Prostate gland (tissue), 2 donors: ENCODE measurements at regions of chr19 and their contacts with region 1.

Region 1: DNA sequence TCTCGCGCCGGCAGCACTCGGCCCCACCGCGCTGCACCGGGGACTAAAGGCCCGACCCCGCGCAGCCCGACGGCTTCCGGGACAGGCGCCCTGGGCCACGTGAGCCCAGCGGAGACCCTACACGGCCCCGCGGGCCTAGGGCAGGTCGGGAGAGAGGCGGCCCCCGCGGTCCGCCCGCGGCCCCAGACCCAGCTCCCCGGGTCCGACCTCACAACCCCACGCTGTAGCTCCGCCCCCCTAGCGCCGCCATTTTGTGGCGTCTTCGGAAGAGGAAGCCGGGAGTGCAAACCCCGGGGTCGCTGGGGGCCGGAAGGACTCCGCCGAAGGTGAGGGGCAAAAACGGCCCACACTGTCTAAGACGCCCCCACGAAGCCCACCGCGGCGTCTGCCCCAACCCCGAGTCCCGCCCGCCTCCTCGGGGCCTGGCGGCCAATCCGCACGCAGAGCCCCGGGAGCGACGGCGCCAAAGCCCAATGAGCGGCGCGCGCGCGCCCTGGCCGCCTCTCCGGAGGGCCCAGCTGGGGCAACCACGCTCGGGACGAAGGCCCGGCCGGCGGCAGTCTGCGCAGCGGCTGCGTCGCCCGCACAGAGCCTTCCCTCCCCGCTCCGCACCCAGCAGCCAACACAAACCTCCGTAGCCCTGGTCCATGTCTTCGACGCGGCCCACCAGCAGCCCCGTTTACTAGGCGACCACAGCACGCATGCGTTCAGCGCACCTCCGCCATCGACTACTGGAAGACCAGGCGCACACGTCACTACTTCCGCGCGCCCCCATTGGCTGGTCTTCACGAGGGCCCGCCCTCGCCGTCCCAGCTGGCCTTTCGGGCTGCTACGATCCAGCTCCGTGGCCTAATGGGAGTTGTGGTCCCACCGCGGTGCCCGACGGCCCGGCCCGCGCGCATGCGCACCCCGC is at the start of gene AKAP8:
- DNase-seq: peak; percentile 99
- H3K4me3 ChIP-seq: peak within 1 kb of the TSS; percentile 80 to 94
- H3K27ac ChIP-seq: peak within 1 kb of the TSS; percentile 92 to 96
- H3K4me1 ChIP-seq: peaks cover 17% of the 10 kb centered on the region
- H3K27me3 ChIP-seq: no peaks in the 10 kb centered on the region
- CTCF ChIP-seq: peak in 2 of 4 experiments; percentile 4 to 14
- POLR2A ChIP-seq: peak; percentile 66
- total RNA-seq, gene AKAP8: 30.3 to 34.2 TPM

Region 2: DNA sequence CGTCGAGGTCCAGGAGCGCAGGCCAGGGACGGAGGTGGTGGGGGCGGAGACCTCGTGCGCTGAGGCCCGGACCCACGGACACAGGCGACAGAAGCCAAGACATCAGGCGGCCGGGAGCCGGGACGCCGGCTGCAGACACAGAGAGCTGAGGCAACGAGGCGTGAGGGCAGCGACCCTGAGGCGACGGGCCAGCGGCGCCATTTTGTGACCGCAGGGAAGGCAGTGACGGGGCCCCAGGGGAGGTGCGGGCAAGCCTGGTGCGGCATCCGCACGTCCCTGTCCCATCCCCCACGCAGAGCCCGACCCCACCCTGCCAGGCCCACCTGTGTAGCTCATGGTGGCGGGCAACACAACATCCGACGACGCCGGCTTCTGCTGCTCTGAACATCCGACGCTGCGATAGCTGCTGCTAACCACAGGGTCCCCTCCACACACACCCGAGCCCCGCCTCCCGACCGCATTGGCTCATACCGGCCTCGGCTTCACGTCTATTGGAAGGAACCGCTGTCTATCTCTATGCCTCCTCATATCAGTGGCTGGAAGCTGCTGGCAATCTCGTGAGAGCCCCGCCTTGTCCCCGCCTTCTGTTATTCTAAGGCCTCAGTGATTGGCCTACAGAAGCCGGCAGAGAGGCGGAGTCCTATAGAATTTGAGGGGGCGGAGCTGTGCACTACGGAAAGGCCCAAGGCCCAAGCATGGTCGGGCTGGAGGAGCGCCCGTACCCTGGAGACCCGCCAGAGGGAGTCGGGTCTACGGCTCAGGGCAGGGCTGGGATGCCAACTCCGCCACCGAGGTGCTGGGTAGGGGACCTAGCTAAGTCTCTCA is 39.5 kb after region 1 on chr19 and contains the start of gene AKAP8L:
- intact Hi-C with region 1: loop called (anchors 5 kb)
- DNase-seq: peak; percentile 99
- H3K4me3 ChIP-seq: peak within 1 kb of the TSS; percentile 92 to 97
- H3K27ac ChIP-seq: peak within 1 kb of the TSS; percentile 83 to 85
- H3K4me1 ChIP-seq: peaks cover 28% of the 10 kb centered on the region
- H3K27me3 ChIP-seq: no peaks in the 10 kb centered on the region
- CTCF ChIP-seq: peak in 2 of 4 experiments; percentile 73 to 76
- POLR2A ChIP-seq: peak; percentile 83
- total RNA-seq, gene AKAP8L: 107 to 269 TPM

Region 3: GRCh38 chr19:15432629-15433518 is 53.5 kb after region 1 on chr19:
- intact Hi-C with region 1: loop called (anchors 5 kb)
- DNase-seq: peak; percentile 84
- H3K4me3 ChIP-seq: peak overlapping the region; percentile 78 to 85
- H3K27ac ChIP-seq: peak overlapping the region; percentile 87 to 88
- H3K4me1 ChIP-seq: peaks cover 18% of the 10 kb centered on the region
- H3K27me3 ChIP-seq: no peaks in the 10 kb centered on the region
- CTCF ChIP-seq: no peak
- POLR2A ChIP-seq: no peak

Region 4: DNA sequence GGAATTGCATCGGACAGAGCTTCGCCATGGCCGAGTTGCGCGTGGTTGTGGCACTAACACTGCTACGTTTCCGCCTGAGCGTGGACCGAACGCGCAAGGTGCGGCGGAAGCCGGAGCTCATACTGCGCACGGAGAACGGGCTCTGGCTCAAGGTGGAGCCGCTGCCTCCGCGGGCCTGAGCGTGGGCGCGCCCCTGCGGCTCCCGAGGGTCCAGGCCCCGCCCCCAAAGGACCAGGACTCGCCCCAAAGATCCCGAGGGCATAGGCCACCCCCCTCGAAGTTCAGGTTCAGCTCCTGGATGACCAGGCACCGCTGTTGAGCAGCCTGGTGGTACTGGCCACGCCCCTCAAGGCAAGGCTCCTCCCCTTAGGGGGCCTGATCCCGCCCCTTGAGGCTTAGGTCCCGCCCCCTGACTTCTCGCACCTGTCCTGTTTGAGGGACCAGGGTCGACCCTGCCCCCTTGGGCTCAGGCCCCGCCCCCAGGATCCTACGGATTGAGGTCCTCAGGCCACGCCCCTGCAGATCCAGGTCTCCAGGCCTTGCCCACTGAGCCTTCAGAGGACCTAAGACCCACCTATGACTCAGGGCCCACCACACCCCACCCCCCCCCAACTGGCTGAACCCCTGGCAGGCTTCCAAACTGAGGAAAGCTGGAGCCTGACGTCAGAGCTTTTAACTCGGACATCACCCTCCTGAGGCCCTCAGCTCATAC is 172.1 kb after region 1 on chr19:
- intact Hi-C with region 1: no loop called
- DNase-seq: no peak
- H3K4me3 ChIP-seq: peak overlapping the region in 1 of 2 donors; percentile 10
- H3K27ac ChIP-seq: no peak overlapping the region
- H3K4me1 ChIP-seq: no peaks in the 10 kb centered on the region
- H3K27me3 ChIP-seq: no peaks in the 10 kb centered on the region
- CTCF ChIP-seq: no peak
- POLR2A ChIP-seq: no peak

Region 5: DNA sequence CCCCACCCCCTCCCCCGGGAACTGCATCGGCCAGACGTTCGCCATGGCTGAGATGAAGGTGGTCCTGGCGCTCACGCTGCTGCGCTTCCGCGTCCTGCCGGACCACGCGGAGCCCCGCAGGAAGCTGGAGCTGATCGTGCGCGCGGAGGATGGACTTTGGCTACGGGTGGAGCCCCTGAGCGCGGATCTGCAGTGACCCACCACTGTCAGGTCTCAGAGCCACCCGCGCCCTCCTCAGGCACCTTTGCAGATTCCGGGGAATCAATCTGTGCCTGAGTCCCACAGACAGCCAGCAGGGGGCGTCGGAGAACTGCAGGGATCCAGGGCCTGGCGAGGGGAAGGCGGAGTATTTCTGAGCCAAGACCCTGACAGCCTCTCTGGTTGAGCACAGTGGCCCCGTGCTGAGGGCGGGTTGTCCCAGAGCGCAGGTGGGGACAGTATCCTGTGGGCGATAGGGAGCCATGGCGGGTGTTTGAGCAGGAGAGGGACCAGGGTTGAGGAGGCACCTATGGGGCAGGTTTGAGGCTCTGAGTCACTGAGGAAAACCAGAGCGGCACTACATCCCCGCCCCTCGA is 205.3 kb after region 1 on chr19:
- intact Hi-C with region 1: no loop called
- DNase-seq: peak; percentile 72
- H3K4me3 ChIP-seq: no peak overlapping the region
- H3K27ac ChIP-seq: no peak overlapping the region
- H3K4me1 ChIP-seq: no peaks in the 10 kb centered on the region
- H3K27me3 ChIP-seq: no peaks in the 10 kb centered on the region
- CTCF ChIP-seq: peak; percentile 74 to 94 (median 84)
- POLR2A ChIP-seq: peak; percentile 10